Cardiac septum (tissue), 1 donor: ENCODE measurements at regions of chr14 and their contacts with region 1.

Region 1: DNA sequence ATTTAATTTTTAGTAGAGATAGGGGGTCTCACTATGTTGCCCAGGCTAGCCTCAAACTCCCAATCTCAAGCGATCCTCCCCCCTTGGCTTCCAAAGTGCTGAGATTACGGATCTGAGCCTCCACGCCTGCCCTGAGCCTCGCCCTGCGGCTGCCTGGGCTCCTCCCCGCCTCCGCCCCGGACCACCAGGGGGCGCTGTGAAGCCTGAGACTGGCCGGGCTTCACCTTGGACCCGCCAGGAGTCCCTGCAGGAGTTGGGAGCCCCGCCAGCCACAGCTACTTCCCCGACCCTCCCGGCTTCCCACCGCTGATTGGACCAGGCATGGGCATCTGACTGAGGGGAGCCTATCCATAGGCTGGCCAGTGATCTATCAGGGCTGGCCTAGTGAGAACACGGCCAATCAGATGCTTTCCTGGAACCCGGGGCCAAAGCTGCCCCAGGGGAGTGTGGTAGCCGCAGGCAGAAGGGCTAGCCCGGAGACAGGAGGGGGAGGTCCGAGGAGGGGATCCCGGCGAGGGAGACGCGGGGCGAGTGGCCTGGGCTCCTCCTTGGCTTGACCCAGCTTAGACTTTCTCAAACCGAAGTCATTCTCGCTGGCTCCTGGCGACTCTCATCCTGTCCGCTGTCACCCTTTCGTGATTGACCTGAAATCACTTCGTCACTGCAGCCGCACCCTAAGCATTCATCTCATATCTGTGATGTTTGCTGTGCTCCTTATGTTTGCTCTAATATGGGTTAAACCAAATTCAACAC is 15.1 kb upstream of the ANKRD9 start:
- DNase-seq: peak; percentile 98

Region 2: DNA sequence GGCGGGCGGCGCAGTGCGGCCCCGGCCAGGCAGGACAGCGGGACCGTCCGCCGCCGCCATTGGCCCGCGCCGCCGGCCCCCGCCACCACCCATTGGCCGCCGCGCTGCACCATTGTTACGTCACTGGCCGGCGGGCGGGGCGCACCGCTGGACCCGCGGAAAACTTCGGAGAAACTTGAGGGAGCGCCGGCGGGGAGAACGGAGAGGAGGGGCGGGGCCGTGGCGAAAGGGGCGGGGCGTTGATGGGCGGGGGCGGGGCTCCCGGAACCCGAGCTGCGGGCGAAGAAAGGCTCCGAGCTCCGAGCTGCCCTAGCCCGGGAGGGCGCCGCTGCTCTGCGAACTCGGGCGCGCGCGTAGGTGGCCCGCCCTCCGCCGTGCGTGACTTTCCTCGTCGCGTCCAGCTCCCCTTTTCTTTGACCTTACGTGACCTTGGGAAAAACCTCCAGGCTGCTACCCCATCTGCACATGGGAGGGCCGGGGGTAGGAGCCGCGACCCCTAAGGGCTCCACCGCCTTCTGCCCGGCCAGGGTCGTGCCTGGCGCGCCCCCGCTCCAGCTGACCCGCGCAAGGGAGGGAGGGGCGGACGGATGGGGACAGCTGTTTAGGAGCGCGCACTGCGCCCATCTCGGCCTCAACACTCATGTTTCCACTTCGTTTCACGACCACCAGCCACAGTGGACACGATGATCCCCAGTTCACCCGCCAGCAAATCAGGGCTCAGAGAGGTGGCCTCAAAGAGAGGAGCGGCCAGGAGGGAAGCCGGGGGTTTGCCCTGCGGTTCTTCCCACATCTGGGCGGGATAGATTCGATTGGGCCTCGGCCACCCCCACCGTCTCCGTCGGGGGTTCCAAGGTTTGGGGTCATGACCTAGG is 14.7 kb before region 1 on chr14 and contains the start of gene ANKRD9:
- intact Hi-C with region 1: no loop called
- DNase-seq: peak; percentile 97
- total RNA-seq, gene ANKRD9: 137 TPM

Region 3: GRCh38 chr14:102565331-102565887 is 40.8 kb after region 1 on chr14:
- intact Hi-C with region 1: no loop called
- DNase-seq: no peak

Region 4: GRCh38 chr14:102591889-102592763 is 67.5 kb after region 1 on chr14 and contains the start of gene RCOR1:
- intact Hi-C with region 1: loop called (anchors 5 kb)
- DNase-seq: peak; percentile 99
- total RNA-seq, gene RCOR1: 12.5 TPM

Region 5: GRCh38 chr14:102694530-102695166 is 170.0 kb after region 1 on chr14:
- intact Hi-C with region 1: loop called (anchors 10 kb)
- DNase-seq: no peak